ENCODE measurements at regions of chr19 and their contacts with region 1.

Region 1: GRCh38 chr19:11242864-11243797 is 3.7 kb downstream of the ANGPTL8 start:
- DNase-seq: peak; percentile 61
- ATAC-seq: peak; percentile 76
- H3K4me3 ChIP-seq: no peak overlapping the region; a peak in 1 of 6 replicates
- H3K27ac ChIP-seq: peak overlapping the region; percentile 25
- H3K4me1 ChIP-seq: peaks cover 55% of the 10 kb centered on the region
- H3K27me3 ChIP-seq: no peaks in the 10 kb centered on the region
- CTCF ChIP-seq: peak; percentile 84
- EP300 ChIP-seq: no peak
- POLR2A ChIP-seq: peak; percentile 6 to 55; a peak in 3 of 4 replicates
- RAD21 ChIP-seq: no peak

Region 2: DNA sequence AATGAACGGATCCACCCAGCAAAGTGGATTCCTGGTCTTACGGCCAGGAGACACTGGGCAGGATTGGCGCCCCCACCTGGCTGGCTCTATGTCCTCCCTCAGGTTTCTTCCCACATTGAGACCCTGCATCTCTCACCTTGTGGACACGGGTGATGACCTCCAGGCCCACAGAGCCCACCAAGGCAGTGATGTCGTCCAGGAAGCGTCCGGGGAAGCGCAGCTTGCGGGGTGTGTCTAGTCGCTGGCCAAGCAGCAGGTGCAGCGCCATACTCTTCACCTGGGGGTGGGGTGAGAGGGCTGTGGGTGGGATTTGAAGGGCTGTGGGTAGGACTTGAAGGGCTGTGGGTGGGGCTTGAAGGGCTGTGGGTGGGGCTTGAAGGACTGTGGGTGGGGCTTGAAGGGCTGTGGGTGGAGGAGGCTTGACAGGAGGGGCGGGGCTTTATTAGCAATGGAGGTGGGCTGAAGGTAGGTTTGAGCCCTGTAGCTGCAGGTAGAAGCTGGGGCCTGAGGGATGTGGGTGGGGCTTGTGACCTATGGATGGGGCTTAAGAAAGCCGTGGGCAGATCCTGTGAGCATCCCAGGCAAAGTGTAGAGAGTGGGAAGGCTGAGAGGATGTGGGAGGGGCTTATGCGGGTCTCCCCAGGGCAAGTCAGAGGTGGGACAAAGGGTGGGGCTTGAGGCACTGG is 15.8 kb before region 1 on chr19:
- CTCF ChIA-PET with region 1: no interaction called
- POLR2A ChIA-PET with region 1: no interaction called
- in situ Hi-C with region 1: no loop called
- intact Hi-C with region 1: loop called (anchors 1 kb)
- DNase-seq: peak; percentile 27
- ATAC-seq: peak; percentile 51
- H3K4me3 ChIP-seq: no peak overlapping the region
- H3K27ac ChIP-seq: no peak overlapping the region
- H3K4me1 ChIP-seq: peaks cover 22% of the 10 kb centered on the region
- H3K27me3 ChIP-seq: no peaks in the 10 kb centered on the region
- CTCF ChIP-seq: peak; percentile 64
- EP300 ChIP-seq: no peak
- POLR2A ChIP-seq: no peak
- RAD21 ChIP-seq: 0 out of 2 replicates have a peak, but pooled peaks have one; percentile 27

Region 3: DNA sequence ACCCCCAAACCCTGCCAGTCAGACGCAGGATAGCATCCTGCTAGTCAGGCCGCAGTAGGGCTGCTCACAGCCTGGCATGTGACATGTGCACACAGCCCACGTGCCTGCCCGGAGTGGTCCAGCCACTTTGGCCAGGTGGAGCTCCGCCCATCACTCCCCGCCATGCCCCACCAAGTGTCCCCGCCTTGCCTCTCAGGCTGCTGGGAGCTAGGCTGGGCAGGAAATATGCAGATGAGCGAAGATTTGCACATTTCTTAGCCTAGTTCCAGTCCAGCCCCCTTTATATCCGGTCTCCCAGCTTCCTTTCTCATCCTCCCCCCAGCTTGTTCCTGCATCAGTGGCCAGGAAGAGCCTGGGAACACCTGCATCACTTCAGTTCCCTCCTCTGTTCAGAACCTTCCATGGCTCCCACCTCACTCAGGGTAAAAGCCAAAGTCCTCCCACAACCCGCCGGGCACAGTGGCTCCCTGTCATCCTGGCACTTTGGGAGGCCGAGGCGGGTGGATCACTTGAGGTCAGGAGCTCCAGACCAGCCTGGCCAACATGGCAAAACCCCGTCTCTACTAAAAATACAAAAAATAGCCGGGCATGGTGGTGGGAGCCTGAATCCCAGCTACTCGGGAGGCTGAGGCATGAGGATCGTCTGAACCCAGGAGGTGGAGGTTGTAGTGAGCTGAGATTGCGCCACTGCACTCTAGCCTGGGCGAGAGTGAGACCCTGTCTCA is 21.5 kb after region 1 on chr19:
- CTCF ChIA-PET with region 1: no interaction called
- POLR2A ChIA-PET with region 1: no interaction called
- in situ Hi-C with region 1: no loop called
- intact Hi-C with region 1: loop called (anchors 2 kb)
- DNase-seq: peak; percentile 31
- ATAC-seq: peak; percentile 8; the same call in 2 of the 3 replicates
- H3K4me3 ChIP-seq: peak overlapping the region in 1 of 3 experiments; percentile 46; a peak in 1 of 6 replicates
- H3K27ac ChIP-seq: no peak overlapping the region
- H3K4me1 ChIP-seq: peaks cover 80% of the 10 kb centered on the region
- H3K27me3 ChIP-seq: peaks cover 0 to 2% of the 10 kb centered on the region in 2 experiments; a peak in 1 of 5 replicates
- CTCF ChIP-seq: peak; percentile 12; the same call in 1 of the 2 replicates
- EP300 ChIP-seq: no peak
- POLR2A ChIP-seq: no peak
- RAD21 ChIP-seq: no peak

Measured in HepG2 (cell line).